A673 (cell line): ENCODE measurements at regions of chr2 and their contacts with region 1.

Region 1: DNA sequence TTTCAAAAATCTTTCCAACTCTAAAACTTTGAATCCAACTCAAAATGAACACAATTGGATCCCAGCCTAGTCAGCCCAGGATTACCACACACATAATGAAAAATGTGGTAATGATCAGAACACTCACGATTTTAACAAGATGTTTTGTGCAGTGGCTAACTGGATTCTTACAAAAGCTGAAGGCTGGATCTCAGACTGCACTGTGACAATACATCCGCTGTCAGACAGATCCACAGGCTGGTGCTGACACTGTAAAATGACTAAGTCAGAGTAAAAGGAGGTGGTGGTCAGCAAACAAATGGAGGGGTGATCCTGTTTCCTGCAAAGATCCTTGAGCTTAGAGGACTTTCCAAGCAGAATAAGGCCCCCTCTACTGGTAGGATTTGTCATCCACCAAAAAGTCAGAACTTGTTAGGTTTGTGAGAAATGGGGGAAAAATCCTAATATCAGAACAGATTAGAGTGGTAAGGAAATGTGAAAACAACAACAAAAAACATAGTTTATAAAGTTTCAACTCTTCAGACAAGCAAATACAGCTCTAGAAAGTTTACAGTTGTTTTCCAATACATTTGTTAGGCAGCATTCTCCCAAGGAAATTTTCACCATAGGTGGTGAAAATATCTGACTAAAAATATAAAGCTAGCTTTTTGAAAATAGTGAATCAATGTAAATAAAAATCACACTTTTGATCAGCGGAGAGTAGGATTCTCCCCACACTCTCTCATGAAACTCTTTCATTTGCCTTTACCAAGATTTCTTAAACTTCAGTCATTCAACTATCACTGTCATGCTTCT is 211.9 kb downstream of the AGPS start:
- DNase-seq: peak; percentile 77
- H3K4me3 ChIP-seq: peak overlapping the region; percentile 18
- H3K27ac ChIP-seq: peak overlapping the region; percentile 51
- H3K4me1 ChIP-seq: peaks cover 49% of the 10 kb centered on the region
- H3K27me3 ChIP-seq: no peaks in the 10 kb centered on the region
- CTCF ChIP-seq: peak; percentile 84

Region 2: GRCh38 chr2:177419274-177419673 is 185.2 kb before region 1 on chr2:
- CTCF ChIA-PET with region 1: no interaction called
- POLR2A ChIA-PET with region 1: no interaction called
- intact Hi-C with region 1: loop called (anchors 5 kb)
- DNase-seq: peak; percentile 40
- H3K4me3 ChIP-seq: no peak overlapping the region
- H3K27ac ChIP-seq: peak overlapping the region; percentile 56
- H3K4me1 ChIP-seq: peaks cover 35% of the 10 kb centered on the region
- H3K27me3 ChIP-seq: no peaks in the 10 kb centered on the region
- CTCF ChIP-seq: no peak

Region 3: DNA sequence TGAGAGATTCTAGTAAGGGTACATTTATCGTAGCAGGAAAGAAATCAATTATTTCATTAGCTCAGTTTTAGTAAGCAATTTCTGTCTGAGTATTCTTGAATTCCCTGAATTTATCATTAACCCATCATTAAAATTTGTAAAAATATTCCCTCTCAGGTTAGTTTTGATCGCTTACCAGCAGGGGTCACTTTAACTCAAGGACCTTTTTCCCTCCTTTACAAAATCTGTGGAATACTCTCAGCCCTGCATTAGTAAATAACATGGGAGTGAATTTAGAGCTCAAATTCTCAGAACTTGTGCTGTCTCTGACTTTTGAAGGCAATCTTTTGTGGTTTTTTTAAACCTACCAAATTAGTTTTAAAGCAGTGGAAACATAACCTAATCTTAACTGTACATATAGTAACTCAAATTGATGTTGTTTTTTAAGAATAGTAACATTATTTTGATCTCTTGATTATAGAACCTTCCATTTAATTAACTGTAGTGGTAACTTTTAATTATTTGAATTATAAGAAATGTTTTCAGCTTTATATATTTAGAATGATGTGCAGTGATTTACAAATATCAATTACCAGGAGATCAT is 114.7 kb before region 1 on chr2:
- CTCF ChIA-PET with region 1: interaction called, 4 read pairs
- POLR2A ChIA-PET with region 1: no interaction called
- intact Hi-C with region 1: loop called (anchors 2 kb)
- DNase-seq: peak; percentile 66
- H3K4me3 ChIP-seq: no peak overlapping the region
- H3K27ac ChIP-seq: no peak overlapping the region
- H3K4me1 ChIP-seq: peaks cover 14% of the 10 kb centered on the region
- H3K27me3 ChIP-seq: no peaks in the 10 kb centered on the region
- CTCF ChIP-seq: peak; percentile 73

Region 4: GRCh38 chr2:177552422-177553175 is 51.9 kb before region 1 on chr2:
- CTCF ChIA-PET with region 1: no interaction called
- POLR2A ChIA-PET with region 1: no interaction called
- intact Hi-C with region 1: loop called (anchors 2 kb)
- DNase-seq: peak; percentile 95
- H3K4me3 ChIP-seq: peak overlapping the region; percentile 68
- H3K27ac ChIP-seq: peak overlapping the region; percentile 99
- H3K4me1 ChIP-seq: peaks cover 22% of the 10 kb centered on the region
- H3K27me3 ChIP-seq: no peaks in the 10 kb centered on the region
- CTCF ChIP-seq: 0 out of 2 replicates have a peak, but pooled peaks have one; percentile 15

Region 5: DNA sequence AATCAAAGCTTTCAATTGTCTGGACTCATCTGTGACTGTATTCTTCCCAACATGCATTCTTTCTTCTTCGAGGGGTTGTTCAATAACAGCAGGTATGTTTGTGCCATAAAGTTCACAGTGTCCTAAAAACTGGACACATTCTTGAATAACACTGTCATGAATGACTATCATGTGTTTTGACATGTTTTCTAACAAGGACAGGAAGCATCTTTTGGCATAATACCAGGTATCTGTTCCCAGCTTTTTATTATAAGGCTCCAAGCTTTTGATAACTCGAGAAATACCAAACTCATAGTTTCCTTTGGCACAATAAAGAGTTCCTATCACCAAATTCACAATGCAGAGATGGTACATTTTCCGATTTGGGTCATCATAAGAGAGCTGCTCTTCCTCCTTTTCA is 12.3 kb after region 1 on chr2:
- CTCF ChIA-PET with region 1: no interaction called
- POLR2A ChIA-PET with region 1: no interaction called
- intact Hi-C with region 1: no loop called
- DNase-seq: no peak
- H3K4me3 ChIP-seq: no peak overlapping the region
- H3K27ac ChIP-seq: no peak overlapping the region
- H3K4me1 ChIP-seq: peaks cover 10% of the 10 kb centered on the region
- H3K27me3 ChIP-seq: no peaks in the 10 kb centered on the region
- CTCF ChIP-seq: no peak